Heart left ventricle (tissue), 16 donors: ENCODE measurements at regions of chr16 and their contacts with region 1.

Region 1: DNA sequence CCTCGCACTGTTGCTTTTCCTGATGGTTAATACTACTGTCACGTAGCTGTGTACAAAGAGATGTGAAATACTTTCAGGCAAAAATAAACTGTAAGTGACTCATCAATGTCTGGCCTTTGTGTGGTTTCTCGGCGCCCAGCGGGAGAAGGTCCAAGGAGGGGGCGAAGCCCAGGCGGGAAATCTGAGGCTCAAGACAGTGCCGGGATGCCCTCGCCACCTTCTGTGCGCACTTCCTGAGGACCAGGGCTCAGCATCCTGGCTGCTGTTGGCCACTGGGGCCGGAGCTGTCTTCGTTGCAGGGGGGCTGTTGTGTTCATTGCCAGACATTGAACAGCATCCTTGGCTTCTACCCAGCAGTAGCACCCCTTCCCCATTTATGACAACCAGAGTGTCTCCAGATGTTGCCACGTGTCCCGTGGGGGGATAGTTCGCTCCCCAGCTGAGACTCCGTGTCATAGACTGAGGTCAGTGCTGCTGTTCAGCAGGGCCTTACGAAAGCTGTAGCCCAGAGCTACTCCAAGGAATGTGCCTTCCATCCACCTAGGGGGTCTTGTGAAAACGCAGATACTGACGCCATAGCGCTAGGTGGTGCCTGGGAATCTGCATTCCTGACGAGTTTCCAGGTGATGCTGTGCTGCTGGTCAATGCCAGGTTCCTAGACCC is 67.3 kb upstream of the PLCG2 start:
- DNase-seq: no peak
- ATAC-seq: peak in 2 of 4 donors; percentile 18 to 57
- H3K4me3 ChIP-seq: no peak overlapping the region
- H3K27ac ChIP-seq: peak overlapping the region in 1 of 12 donors; percentile 7
- H3K4me1 ChIP-seq: peaks cover 0 to 10% (median 0%) of the 10 kb centered on the region in 12 donors
- H3K27me3 ChIP-seq: no peaks in the 10 kb centered on the region
- CTCF ChIP-seq: no peak
- POLR2A ChIP-seq: no peak

Region 2: GRCh38 chr16:81493755-81494433 is 217.9 kb before region 1 on chr16:
- intact Hi-C with region 1: loop called in 1 of 10 experiments (anchors 10 kb)
- DNase-seq: peak in 1 of 5 donors; percentile 24
- ATAC-seq: peak; percentile 30 to 85 (median 54)
- H3K4me3 ChIP-seq: no peak overlapping the region
- H3K27ac ChIP-seq: peak overlapping the region in 11 of 12 donors; percentile 13 to 81 (median 74)
- H3K4me1 ChIP-seq: peaks cover 3 to 96% (median 47%) of the 10 kb centered on the region in 12 donors
- H3K27me3 ChIP-seq: no peaks in the 10 kb centered on the region
- CTCF ChIP-seq: no peak
- POLR2A ChIP-seq: no peak

Region 3: DNA sequence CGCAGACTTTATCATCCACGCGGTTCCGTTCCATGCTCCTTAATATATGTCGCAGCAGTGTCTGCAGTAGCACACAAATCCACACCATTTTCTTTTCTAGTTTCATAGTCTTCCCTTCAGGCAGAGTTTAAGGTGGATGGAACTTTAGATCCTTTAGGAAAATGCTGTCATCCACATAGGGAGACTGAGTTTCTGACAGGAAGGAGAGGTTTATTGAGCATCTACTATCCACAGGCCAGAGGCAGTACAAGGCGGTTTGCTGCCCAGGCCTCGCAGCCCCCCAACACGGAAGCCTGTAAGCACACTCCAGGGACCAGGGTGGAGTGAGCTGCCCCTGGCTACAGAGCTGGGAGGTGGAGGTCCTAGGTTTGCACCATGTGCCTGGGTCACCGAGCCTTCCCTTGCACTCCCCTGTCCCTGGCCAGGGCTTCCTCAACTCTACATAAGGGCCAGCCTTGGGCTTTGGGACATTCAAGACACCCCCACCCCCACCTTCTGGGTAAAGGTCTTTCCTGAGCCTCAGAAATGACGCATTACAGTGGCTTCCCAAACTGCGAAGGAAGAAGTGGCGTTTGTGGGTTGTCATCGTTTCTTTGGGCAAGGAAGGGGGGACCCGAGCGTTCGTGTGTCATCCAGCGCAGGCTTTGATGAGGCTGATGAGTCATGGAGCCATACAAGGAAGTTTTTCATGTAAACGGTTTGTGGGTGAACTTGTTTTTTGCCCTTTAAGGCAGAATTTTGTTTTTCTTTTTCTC is 79.2 kb before region 1 on chr16:
- intact Hi-C with region 1: loop called in 1 of 10 experiments (anchors 5 kb)
- DNase-seq: peak in 1 of 5 donors; percentile 47
- ATAC-seq: peak in 2 of 4 donors; percentile 38 to 50
- H3K4me3 ChIP-seq: no peak overlapping the region
- H3K27ac ChIP-seq: peak overlapping the region in 2 of 12 donors; percentile 1 to 83
- H3K4me1 ChIP-seq: peaks cover 0 to 33% (median 2%) of the 10 kb centered on the region in 12 donors
- H3K27me3 ChIP-seq: no peaks in the 10 kb centered on the region
- CTCF ChIP-seq: no peak
- POLR2A ChIP-seq: no peak